Activated CD4-positive, alpha-beta T cell treated with anti-CD3 and anti-CD28 coated beads for 36 hours (primary cell): ENCODE measurements at regions of chr4 and their contacts with region 1.

Region 1: GRCh38 chr4:165464813-165465381 is 86.1 kb downstream of the CPE start:
- DNase-seq: peak; percentile 39
- ATAC-seq: peak; percentile 68
- H3K4me3 Mint-ChIP-seq: no peak overlapping the region
- H3K27ac Mint-ChIP-seq: no peak overlapping the region
- H3K4me1 Mint-ChIP-seq: no peaks in the 10 kb centered on the region
- H3K27me3 Mint-ChIP-seq: no peaks in the 10 kb centered on the region

Region 2: DNA sequence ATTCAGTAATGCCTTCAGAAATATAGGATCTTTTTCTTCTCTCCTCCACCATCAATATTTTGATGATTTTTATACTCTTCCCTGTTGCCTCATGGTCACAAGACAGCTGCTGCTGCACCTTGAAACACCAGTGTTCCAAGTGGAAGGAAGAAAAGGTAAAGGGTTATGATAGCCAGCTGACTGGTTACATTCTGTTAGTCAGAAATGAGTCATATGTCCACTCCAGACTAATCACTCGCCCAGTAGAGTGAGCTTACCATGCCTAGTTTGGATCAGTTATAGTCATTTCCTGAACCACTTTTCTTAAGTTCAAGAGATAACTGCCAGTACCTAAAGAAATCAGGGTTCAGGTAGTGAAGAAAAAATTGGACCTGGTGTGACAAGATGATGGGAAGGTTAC is 1243.3 kb before region 1 on chr4:
- CTCF ChIA-PET with region 1: no interaction called
- POLR2A ChIA-PET with region 1: no interaction called
- intact Hi-C with region 1: no loop called
- DNase-seq: no peak
- ATAC-seq: no peak
- H3K4me3 Mint-ChIP-seq: no peak overlapping the region
- H3K27ac Mint-ChIP-seq: no peak overlapping the region
- H3K4me1 Mint-ChIP-seq: no peaks in the 10 kb centered on the region
- H3K27me3 Mint-ChIP-seq: no peaks in the 10 kb centered on the region

Region 3: GRCh38 chr4:164779811-164780216 is 685.1 kb before region 1 on chr4:
- CTCF ChIA-PET with region 1: no interaction called
- POLR2A ChIA-PET with region 1: no interaction called
- intact Hi-C with region 1: loop called in 1 of 2 experiments (anchors 5 kb)
- DNase-seq: peak; percentile 42
- ATAC-seq: no peak
- H3K4me3 Mint-ChIP-seq: no peak overlapping the region
- H3K27ac Mint-ChIP-seq: no peak overlapping the region
- H3K4me1 Mint-ChIP-seq: no peaks in the 10 kb centered on the region
- H3K27me3 Mint-ChIP-seq: no peaks in the 10 kb centered on the region

Region 4: GRCh38 chr4:165355900-165356300 is 109.0 kb before region 1 on chr4:
- CTCF ChIA-PET with region 1: interaction called, 8 read pairs
- POLR2A ChIA-PET with region 1: no interaction called
- intact Hi-C with region 1: loop called (anchors 2 kb)
- DNase-seq: peak; percentile 33
- ATAC-seq: peak; percentile 53
- H3K4me3 Mint-ChIP-seq: no peak overlapping the region
- H3K27ac Mint-ChIP-seq: no peak overlapping the region
- H3K4me1 Mint-ChIP-seq: no peaks in the 10 kb centered on the region
- H3K27me3 Mint-ChIP-seq: peaks cover 21% of the 10 kb centered on the region

Region 5: DNA sequence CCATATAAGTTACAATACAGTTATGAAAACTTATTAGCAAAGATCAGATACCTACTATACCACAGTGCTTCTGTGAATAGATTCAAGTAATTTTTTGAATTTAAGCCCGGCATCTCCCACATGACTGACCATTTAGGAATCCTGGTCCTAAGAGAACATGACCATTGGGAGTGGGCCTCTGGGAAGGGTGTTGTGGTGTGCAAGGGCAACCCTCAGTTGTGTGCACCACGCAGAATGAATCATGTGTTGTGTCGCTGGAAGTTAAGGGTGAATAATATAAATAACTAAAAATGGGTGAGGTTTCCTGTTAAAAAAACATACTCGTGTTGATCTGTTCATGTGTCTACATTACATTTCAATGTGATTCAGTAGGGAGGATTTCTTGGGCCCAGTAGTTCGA is 70.6 kb before region 1 on chr4:
- CTCF ChIA-PET with region 1: no interaction called
- POLR2A ChIA-PET with region 1: no interaction called
- intact Hi-C with region 1: no loop called
- DNase-seq: no peak
- ATAC-seq: no peak
- H3K4me3 Mint-ChIP-seq: no peak overlapping the region
- H3K27ac Mint-ChIP-seq: no peak overlapping the region
- H3K4me1 Mint-ChIP-seq: no peaks in the 10 kb centered on the region
- H3K27me3 Mint-ChIP-seq: peaks cover 10% of the 10 kb centered on the region

Region 6: DNA sequence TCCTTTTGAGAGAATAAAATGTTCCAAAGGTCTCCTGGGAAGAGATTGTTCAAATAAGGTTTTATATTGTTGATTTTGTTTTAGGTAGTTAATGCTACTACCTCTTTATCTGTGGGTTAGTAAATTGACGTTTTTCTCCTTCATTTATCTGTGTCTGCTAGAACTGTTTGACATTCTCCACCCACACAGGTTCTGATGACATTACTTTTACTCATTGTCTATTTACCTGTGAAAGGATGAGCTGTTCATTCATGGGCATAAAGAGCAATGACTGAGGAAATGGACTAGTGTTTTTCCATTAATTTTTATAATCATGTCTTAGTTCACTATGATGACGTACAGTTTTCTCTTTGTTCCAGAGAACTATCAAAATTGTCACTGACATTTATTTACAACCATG is 10.5 kb before region 1 on chr4:
- CTCF ChIA-PET with region 1: interaction called, 15 read pairs
- POLR2A ChIA-PET with region 1: no interaction called
- intact Hi-C with region 1: no loop called
- DNase-seq: no peak
- ATAC-seq: no peak
- H3K4me3 Mint-ChIP-seq: no peak overlapping the region
- H3K27ac Mint-ChIP-seq: no peak overlapping the region
- H3K4me1 Mint-ChIP-seq: peaks cover under 1% of the 10 kb centered on the region
- H3K27me3 Mint-ChIP-seq: peaks cover 5% of the 10 kb centered on the region